Cardiac septum (tissue), 1 donor: ENCODE measurements at regions of chr15 and their contacts with region 1.

Region 1: GRCh38 chr15:85380217-85380811 is at the start of gene AKAP13:
- DNase-seq: peak; percentile 99
- total RNA-seq, gene AKAP13: 458 TPM

Region 2: GRCh38 chr15:85337425-85338074 is 42.8 kb before region 1 on chr15:
- intact Hi-C with region 1: loop called (anchors 2 kb)
- DNase-seq: peak; percentile 78

Region 3: DNA sequence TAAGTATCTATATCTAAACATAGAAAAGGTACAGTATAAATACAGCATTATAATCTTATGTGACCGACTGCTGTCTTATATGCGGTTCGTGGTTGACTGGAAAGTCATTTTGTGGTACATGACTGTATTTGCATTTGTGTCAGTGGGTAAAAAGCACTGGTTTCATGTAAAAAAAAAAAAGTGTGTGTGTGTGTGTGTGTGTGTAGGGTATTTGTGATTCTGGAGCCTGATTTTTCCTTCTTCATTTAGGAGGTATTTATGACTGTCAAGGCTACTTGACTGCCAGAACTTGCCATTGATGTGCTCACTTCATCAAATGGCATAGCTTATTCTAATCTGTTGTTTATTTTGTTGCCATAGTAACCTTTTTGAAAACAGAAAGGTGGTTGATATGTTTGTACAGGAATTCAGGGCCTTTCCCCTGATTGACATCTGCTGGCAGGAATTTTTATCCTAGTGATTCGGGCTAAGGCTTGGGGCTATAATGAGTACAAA is 63.3 kb after region 1 on chr15:
- intact Hi-C with region 1: no loop called
- DNase-seq: no peak

Region 4: GRCh38 chr15:85494048-85494793 is 113.9 kb after region 1 on chr15:
- intact Hi-C with region 1: loop called (anchors 10 kb)
- DNase-seq: no peak